Mammary epithelial cell (primary cell): ENCODE measurements at regions of chr1 and their contacts with region 1.

Region 1: DNA sequence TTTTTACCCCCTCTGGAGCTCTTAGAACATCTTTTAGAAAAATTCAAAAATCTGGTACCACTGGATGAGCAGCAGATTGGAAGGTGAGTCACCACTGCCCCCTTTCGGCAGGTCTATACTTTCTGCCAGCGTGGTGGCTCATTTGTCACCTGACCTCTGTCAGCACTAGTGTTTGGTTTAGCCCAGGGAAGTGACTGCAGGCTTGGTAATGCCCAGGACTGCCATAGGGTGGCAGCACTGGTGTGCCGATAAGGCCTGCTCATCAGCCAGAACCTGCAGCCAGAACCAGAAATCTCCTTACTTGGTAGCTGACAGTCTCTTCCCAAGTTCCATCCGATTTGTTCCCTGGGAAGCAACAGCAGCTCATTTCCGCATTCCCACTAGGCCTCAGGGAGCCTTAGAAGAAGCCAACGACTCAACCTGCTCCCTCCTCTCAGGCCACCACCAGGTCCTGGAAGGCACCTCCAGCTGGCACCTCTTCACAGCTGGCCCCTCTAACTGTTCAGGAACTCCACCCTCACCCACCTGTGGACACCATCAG is 6.8 kb downstream of the SMIM12 start:
- DNase-seq: peak; percentile 91
- H3K4me3 ChIP-seq: no peak overlapping the region
- H3K27ac ChIP-seq: no peak overlapping the region
- H3K4me1 ChIP-seq: peaks cover 19% of the 10 kb centered on the region
- H3K27me3 ChIP-seq: no peaks in the 10 kb centered on the region
- CTCF ChIP-seq: peak; percentile 96 to 99

Region 2: DNA sequence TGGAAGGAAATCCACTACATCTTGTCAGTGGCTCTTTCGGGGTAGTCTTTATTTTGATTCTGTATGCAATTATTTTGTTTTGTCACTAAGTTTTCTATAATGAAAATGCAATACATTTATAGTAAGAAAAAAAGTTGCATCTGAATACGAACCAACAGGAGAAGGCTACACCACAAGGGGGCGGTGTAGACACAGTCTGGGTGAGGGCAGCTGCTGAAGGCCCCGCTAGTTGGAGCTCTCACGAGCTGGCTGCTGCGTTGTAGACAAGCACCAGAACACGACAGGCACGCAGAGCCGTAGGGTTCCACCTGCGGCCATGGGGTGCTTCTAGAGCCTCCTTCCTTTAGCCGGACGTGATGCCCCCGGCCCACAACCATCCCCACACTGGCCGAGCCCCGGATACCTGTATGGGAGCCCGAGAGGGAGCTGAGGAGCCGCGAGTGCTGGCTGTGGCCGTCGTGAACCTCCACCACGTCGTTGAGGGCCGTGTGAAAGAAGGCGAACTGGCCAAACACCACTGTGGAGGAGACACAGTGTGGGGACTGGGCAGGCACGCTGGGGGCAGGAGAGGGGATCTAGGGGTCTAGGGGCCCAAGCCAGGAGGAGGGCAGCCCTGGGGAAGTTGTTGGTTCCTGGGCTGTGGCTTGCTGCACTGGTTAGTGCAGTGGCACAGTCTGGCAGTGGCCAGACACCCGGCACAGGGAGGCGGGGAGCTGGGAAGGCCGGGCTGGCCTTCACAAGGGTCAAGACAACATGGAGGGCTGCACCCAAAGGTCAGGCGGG is 1219.5 kb before region 1 on chr1:
- CTCF ChIA-PET with region 1: no interaction called
- dilution Hi-C with region 1: no loop called
- in situ Hi-C with region 1: no loop called
- intact Hi-C with region 1: loop called (anchors 1 kb)
- DNase-seq: peak; percentile 62
- H3K4me3 ChIP-seq: no peak overlapping the region
- H3K27ac ChIP-seq: no peak overlapping the region
- H3K4me1 ChIP-seq: no peaks in the 10 kb centered on the region
- H3K27me3 ChIP-seq: no peaks in the 10 kb centered on the region
- CTCF ChIP-seq: peak; percentile 97 to 99

Region 3: DNA sequence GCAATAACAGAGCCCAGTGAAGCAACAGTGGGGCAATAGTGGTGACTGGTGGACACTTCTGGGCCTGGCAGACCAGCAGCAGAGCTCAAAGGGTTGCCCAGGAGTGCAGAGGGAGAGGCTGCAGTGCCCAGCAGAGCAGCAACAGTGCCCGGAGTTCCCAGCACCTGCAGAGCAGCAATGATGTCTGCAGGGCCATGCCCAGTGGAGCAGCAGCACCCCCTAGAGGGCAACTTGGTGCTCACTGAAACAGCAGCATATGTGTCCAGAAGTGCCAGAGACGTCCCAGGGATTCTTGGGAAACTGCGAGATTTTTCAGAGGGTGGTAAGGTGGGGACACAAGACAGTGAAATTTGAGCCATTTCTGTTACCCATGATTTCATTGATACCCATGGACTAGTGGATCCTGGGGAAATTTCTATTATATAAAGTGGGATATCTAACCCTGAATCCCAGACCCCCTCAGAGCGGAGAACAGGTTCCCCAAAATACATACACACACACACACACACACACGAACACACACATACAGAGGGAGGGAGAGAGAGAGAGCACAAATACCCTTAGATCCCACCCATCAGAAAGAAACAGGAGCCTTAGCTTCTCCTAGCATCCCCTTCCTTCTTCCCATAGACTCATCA is 254.8 kb before region 1 on chr1:
- CTCF ChIA-PET with region 1: no interaction called
- dilution Hi-C with region 1: no loop called
- in situ Hi-C with region 1: no loop called
- intact Hi-C with region 1: loop called (anchors 5 kb)
- DNase-seq: peak; percentile 42
- H3K4me3 ChIP-seq: no peak overlapping the region
- H3K27ac ChIP-seq: no peak overlapping the region
- H3K4me1 ChIP-seq: no peaks in the 10 kb centered on the region
- H3K27me3 ChIP-seq: no peaks in the 10 kb centered on the region
- CTCF ChIP-seq: peak; percentile 91 to 95

Region 4: GRCh38 chr1:34627465-34628240 is 225.1 kb before region 1 on chr1:
- CTCF ChIA-PET with region 1: no interaction called
- dilution Hi-C with region 1: no loop called
- in situ Hi-C with region 1: no loop called
- intact Hi-C with region 1: no loop called
- DNase-seq: no peak
- H3K4me3 ChIP-seq: no peak overlapping the region
- H3K27ac ChIP-seq: no peak overlapping the region
- H3K4me1 ChIP-seq: no peaks in the 10 kb centered on the region
- H3K27me3 ChIP-seq: no peaks in the 10 kb centered on the region
- CTCF ChIP-seq: no peak

Region 5: GRCh38 chr1:34742667-34743270 is 110.0 kb before region 1 on chr1:
- CTCF ChIA-PET with region 1: interaction called, 3 read pairs
- dilution Hi-C with region 1: no loop called
- in situ Hi-C with region 1: no loop called
- intact Hi-C with region 1: loop called (anchors 1 kb)
- DNase-seq: peak; percentile 63
- H3K4me3 ChIP-seq: no peak overlapping the region
- H3K27ac ChIP-seq: no peak overlapping the region
- H3K4me1 ChIP-seq: no peaks in the 10 kb centered on the region
- H3K27me3 ChIP-seq: no peaks in the 10 kb centered on the region
- CTCF ChIP-seq: peak; percentile 92 to 98

Region 6: GRCh38 chr1:35192853-35193664 is 340.3 kb after region 1 on chr1 and contains the start of gene SFPQ:
- CTCF ChIA-PET with region 1: no interaction called
- dilution Hi-C with region 1: no loop called
- in situ Hi-C with region 1: no loop called
- intact Hi-C with region 1: loop called (anchors 10 kb)
- DNase-seq: peak; percentile 98
- H3K4me3 ChIP-seq: peak within 1 kb of the TSS; percentile 93 to 100 (median 93)
- H3K27ac ChIP-seq: peak within 1 kb of the TSS; percentile 87
- H3K4me1 ChIP-seq: peaks cover 23% of the 10 kb centered on the region
- H3K27me3 ChIP-seq: no peaks in the 10 kb centered on the region
- CTCF ChIP-seq: no peak
- total RNA-seq, gene SFPQ: 156 to 255 TPM

Region 7: GRCh38 chr1:35769759-35770446 is 917.2 kb after region 1 on chr1 and contains the start of gene CLSPN:
- CTCF ChIA-PET with region 1: no interaction called
- dilution Hi-C with region 1: no loop called
- in situ Hi-C with region 1: no loop called
- intact Hi-C with region 1: loop called (anchors 2 kb)
- DNase-seq: peak; percentile 93
- H3K4me3 ChIP-seq: peak within 1 kb of the TSS; percentile 81 to 92 (median 84)
- H3K27ac ChIP-seq: peak within 1 kb of the TSS; percentile 76
- H3K4me1 ChIP-seq: no peaks in the 10 kb centered on the region
- H3K27me3 ChIP-seq: no peaks in the 10 kb centered on the region
- CTCF ChIP-seq: no peak
- total RNA-seq, gene CLSPN: 2.3 to 29.4 TPM